ENCODE measurements at regions of chr10 and their contacts with region 1.

Region 1: GRCh38 chr10:110007701-110008517 is at the start of gene ADD3:
- DNase-seq: peak; percentile 91
- ATAC-seq: peak; percentile 92
- H3K4me3 ChIP-seq: peak within 1 kb of the TSS; percentile 82
- H3K27ac ChIP-seq: peak within 1 kb of the TSS; percentile 86
- H3K4me1 ChIP-seq: peaks cover 4% of the 10 kb centered on the region; the same call in 1 of the 2 replicates
- H3K27me3 ChIP-seq: no peaks in the 10 kb centered on the region
- CTCF ChIP-seq: no peak
- POLR2A ChIP-seq: peak; percentile 58; the same call in 1 of the 2 replicates
- RAD21 ChIP-seq: no peak
- total RNA-seq, gene ADD3: 137 and 212 TPM in 2 replicates

Region 2: GRCh38 chr10:109922976-109923921 is 84.7 kb before region 1 on chr10 and contains the start of gene XPNPEP1:
- CTCF ChIA-PET with region 1: no interaction called
- POLR2A ChIA-PET with region 1: no interaction called
- dilution Hi-C with region 1: no loop called
- in situ Hi-C with region 1: no loop called
- intact Hi-C with region 1: loop called (anchors 2 kb)
- DNase-seq: peak; percentile 83
- ATAC-seq: peak; percentile 99
- H3K4me3 ChIP-seq: peak within 1 kb of the TSS; percentile 79
- H3K27ac ChIP-seq: peak within 1 kb of the TSS; percentile 91
- H3K4me1 ChIP-seq: peaks cover 10% of the 10 kb centered on the region
- H3K27me3 ChIP-seq: no peaks in the 10 kb centered on the region
- CTCF ChIP-seq: no peak
- POLR2A ChIP-seq: peak; percentile 98
- RAD21 ChIP-seq: no peak
- total RNA-seq, gene XPNPEP1: 136 and 164 TPM in 2 replicates

Region 3: GRCh38 chr10:109966961-109967738 is 40.8 kb before region 1 on chr10:
- CTCF ChIA-PET with region 1: no interaction called
- POLR2A ChIA-PET with region 1: interaction called, 3 read pairs
- dilution Hi-C with region 1: no loop called
- in situ Hi-C with region 1: no loop called
- intact Hi-C with region 1: loop called (anchors 2 kb)
- DNase-seq: peak; percentile 88
- ATAC-seq: peak; percentile 57
- H3K4me3 ChIP-seq: peak overlapping the region; percentile 10; the same call in 1 of the 2 replicates
- H3K27ac ChIP-seq: peak overlapping the region; percentile 97
- H3K4me1 ChIP-seq: peaks cover 25% of the 10 kb centered on the region
- H3K27me3 ChIP-seq: no peaks in the 10 kb centered on the region
- CTCF ChIP-seq: no peak
- POLR2A ChIP-seq: no peak
- RAD21 ChIP-seq: peak; percentile 26

Region 4: GRCh38 chr10:110023785-110024465 is 16.0 kb after region 1 on chr10:
- CTCF ChIA-PET with region 1: no interaction called
- POLR2A ChIA-PET with region 1: no interaction called
- dilution Hi-C with region 1: no loop called
- in situ Hi-C with region 1: no loop called
- intact Hi-C with region 1: loop called (anchors 2 kb)
- DNase-seq: no peak
- ATAC-seq: no peak
- H3K4me3 ChIP-seq: no peak overlapping the region
- H3K27ac ChIP-seq: no peak overlapping the region
- H3K4me1 ChIP-seq: peaks cover 2% of the 10 kb centered on the region
- H3K27me3 ChIP-seq: no peaks in the 10 kb centered on the region
- CTCF ChIP-seq: no peak
- POLR2A ChIP-seq: no peak
- RAD21 ChIP-seq: no peak

Region 5: DNA sequence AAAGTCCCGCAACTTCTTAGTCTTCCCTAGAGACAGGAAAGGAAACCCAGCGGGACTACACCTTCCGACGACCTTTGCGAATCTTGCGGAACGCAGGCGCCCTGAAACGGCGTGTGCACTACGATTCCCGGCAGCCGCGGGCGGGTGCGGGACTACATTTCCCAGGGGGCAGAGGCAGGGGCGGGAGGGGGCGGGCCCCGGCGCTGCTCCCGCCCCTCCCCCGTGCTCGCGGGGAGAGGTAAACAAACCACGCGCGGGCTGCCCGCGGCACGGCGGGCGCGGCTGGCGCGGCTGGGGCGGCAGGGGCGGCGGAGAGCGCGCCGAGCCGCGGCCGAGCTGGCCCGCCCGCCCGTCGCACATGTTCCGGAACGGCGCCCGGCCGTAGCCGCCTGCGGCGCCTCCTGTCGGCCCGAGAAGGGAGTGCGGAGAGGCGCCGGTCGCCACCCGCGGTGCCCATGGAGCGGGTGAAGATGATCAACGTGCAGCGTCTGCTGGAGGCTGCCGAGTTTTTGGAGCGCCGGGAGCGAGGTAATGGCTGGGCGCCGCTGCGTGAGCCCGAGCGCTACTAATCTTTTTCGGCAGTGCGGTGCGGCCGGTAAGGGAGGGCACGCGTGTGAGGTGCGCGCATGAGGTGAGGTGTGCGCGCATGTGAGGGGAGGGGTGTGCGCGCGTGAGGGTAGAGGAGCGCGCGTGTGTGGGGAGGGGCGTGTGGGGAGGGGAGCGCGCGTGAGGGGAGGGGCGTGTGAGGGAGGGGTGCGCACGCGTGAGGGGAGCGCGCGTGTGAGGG is 218.0 kb after region 1 on chr10:
- CTCF ChIA-PET with region 1: no interaction called
- POLR2A ChIA-PET with region 1: no interaction called
- dilution Hi-C with region 1: no loop called
- in situ Hi-C with region 1: no loop called
- intact Hi-C with region 1: loop called (anchors 5 kb)
- DNase-seq: peak; percentile 93
- ATAC-seq: peak; percentile 81
- H3K4me3 ChIP-seq: peak overlapping the region; percentile 90
- H3K27ac ChIP-seq: peak overlapping the region; percentile 96
- H3K4me1 ChIP-seq: peaks cover 6% of the 10 kb centered on the region
- H3K27me3 ChIP-seq: no peaks in the 10 kb centered on the region
- CTCF ChIP-seq: peak; percentile 72
- POLR2A ChIP-seq: no peak
- RAD21 ChIP-seq: peak; percentile 64